ENCODE measurements at regions of chr1 and their contacts with region 1.

Region 1: DNA sequence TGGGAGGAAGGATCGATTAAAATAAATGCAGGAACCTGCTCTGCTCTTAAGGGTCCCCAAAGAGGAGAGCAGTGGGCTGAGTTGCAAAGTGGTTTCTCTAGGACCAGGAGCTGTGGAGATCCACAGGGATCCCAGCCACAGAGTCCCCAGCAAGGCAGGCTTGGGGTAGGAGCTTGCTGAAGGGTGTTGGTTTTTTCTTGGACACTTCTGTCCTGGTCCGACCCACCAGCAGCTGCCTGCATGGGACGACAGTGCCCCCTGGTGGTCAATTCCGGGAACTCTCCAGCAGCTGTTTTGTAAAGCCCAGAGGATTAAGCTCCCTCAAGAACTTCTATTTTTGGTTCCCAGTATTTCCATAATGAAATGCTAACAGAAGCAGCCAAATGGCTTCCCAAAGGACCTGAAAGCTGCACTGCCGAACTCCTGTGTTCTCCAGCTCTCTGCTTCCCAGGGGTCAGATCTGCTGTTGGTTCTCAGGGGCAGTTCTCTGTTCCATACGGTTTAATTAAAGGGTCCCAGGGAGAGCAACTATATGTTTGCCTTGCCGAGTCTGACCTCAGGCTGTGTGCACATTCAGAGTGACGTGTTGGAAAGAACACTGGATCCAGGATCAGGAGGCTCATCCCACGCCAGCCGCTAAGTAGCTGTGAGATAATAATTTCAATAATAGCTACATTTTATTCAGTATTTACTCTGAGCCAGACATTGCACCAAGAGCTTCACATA is 23.2 kb downstream of the NENF start:
- DNase-seq: peak; percentile 37
- H3K4me3 ChIP-seq: no peak overlapping the region
- H3K27ac ChIP-seq: no peak overlapping the region
- H3K4me1 ChIP-seq: no peaks in the 10 kb centered on the region
- H3K27me3 ChIP-seq: no peaks in the 10 kb centered on the region
- CTCF ChIP-seq: peak; percentile 90 to 98

Region 2: DNA sequence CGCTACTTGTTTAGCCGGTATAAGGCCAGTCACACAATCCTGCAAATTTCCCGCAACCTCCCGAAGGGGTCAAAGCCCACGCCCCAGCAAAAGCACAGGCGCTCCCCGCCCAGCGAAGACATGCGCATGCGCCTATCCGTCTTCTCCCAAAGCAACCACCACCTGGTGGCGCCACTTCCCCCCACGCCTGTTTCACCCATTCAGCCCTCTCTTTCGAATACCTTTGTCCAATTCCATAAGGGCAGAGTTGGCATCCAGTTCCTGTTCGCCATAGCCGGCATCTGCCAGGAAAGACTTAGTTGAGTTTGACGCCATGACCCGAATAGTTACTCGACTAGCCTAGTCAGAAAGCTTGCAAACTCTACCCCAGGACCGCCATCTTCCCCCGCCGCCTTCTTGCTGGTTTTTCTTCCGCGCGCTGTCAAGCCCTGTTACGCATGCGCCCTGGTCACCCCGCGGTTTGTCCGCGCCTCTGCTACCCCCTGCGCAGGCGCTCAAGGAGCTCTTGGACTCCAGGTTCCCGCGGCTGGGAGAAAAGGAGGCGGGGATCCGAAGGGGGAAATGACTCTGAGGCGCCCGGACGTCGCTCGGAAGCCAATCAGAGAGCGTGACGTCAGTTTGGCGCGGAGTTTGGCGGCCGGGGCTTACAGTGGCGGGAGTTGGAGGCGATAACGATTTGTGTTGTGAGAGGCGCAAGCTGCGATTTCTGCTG is 420.7 kb before region 1 on chr1 and contains the starts of genes DTL and INTS7:
- CTCF ChIA-PET with region 1: interaction called, 24 read pairs
- dilution Hi-C with region 1: no loop called
- in situ Hi-C with region 1: no loop called
- intact Hi-C with region 1: loop called (anchors 1 kb)
- DNase-seq: peak; percentile 99
- H3K4me3 ChIP-seq: peak within 1 kb of the TSS; percentile 89 to 98 (median 95)
- H3K27ac ChIP-seq: peak within 1 kb of the TSS; percentile 86
- H3K4me1 ChIP-seq: peaks cover 30% of the 10 kb centered on the region
- H3K27me3 ChIP-seq: no peaks in the 10 kb centered on the region
- CTCF ChIP-seq: peak; percentile 77 to 84
- total RNA-seq, gene DTL: 3.2 to 24.6 TPM
- total RNA-seq, gene INTS7: 16.8 to 24.3 TPM

Region 3: GRCh38 chr1:212070720-212071302 is 385.2 kb before region 1 on chr1:
- CTCF ChIA-PET with region 1: interaction called, 16 read pairs
- dilution Hi-C with region 1: no loop called
- in situ Hi-C with region 1: loop called (anchors 5 kb)
- intact Hi-C with region 1: loop called (anchors 1 kb)
- DNase-seq: peak; percentile 25
- H3K4me3 ChIP-seq: no peak overlapping the region
- H3K27ac ChIP-seq: no peak overlapping the region
- H3K4me1 ChIP-seq: no peaks in the 10 kb centered on the region
- H3K27me3 ChIP-seq: no peaks in the 10 kb centered on the region
- CTCF ChIP-seq: peak; percentile 62 to 76

Region 4: GRCh38 chr1:212359794-212360479 is 96.0 kb before region 1 on chr1:
- CTCF ChIA-PET with region 1: no interaction called
- dilution Hi-C with region 1: loop called (anchors 5 kb)
- in situ Hi-C with region 1: no loop called
- intact Hi-C with region 1: no loop called
- DNase-seq: no peak
- H3K4me3 ChIP-seq: no peak overlapping the region
- H3K27ac ChIP-seq: no peak overlapping the region
- H3K4me1 ChIP-seq: no peaks in the 10 kb centered on the region
- H3K27me3 ChIP-seq: no peaks in the 10 kb centered on the region
- CTCF ChIP-seq: no peak

Region 5: DNA sequence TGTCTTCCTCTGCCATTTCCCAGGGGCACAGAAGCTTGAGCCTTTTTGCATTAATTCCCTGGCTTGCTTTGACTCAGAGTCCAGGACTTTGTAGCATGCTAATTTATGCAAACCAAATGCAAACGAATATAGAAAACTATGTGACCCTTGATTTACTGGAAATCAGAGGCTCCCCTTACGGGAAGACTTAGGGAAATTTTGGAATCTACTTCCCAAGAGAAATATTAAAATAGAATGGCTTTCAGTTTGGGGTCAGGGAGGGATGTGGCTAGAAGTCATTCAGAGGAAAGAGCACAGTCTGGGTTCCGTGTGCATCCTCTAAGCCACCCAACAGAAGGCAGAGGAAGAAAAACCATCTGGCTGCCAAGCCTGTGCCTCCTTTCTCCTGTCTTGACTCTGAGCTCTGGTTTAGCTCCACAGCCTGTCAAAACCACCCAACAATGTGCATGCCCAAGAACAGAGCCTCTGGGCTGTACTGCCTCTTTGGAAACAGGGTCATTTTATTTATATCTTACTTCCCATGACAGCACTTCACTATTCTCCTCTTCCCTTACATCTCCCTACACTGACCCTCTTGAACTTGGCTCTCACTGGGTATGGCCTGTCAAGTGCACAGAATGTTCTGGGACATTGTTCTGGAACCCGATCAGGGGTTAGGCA is 182.7 kb after region 1 on chr1:
- CTCF ChIA-PET with region 1: no interaction called
- dilution Hi-C with region 1: no loop called
- in situ Hi-C with region 1: no loop called
- intact Hi-C with region 1: no loop called
- DNase-seq: no peak
- H3K4me3 ChIP-seq: no peak overlapping the region
- H3K27ac ChIP-seq: no peak overlapping the region
- H3K4me1 ChIP-seq: no peaks in the 10 kb centered on the region
- H3K27me3 ChIP-seq: no peaks in the 10 kb centered on the region
- CTCF ChIP-seq: no peak

Region 6: DNA sequence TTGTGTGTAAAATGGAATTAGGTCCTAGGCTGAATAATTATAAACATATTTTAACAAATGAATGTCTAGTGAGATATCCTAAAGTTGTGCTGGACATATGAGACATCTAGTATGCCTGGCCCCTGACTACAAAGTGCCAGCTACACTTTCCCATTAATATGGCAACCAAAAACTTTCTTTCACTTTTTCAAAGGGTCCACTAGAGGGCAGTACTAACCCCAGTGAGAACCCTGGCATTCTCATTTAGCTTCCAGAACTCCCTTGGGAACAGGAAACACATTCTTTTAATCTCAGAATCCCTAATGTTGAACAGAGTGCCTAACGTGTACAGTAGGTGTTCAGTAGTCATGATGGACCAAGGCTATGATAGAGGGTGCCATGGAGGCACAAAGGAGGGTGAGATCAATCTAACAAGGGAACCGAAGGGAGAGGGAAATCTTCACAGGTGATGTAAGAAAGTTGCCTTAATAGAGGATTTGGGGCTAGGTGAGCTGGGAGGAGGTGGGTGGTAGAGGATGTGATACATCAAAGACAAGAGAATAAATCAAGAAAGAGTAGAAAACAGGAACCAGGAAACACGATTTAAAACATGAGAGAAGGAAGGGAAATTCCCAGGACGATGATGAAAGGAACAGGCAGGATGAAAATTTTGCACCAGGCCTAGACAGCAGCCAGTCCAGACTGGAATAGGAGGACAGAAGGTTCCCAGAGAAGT is 294.0 kb after region 1 on chr1:
- CTCF ChIA-PET with region 1: no interaction called
- dilution Hi-C with region 1: no loop called
- in situ Hi-C with region 1: loop called in 1 of 2 experiments (anchors 25 kb)
- intact Hi-C with region 1: no loop called
- DNase-seq: peak; percentile 59
- H3K4me3 ChIP-seq: no peak overlapping the region
- H3K27ac ChIP-seq: no peak overlapping the region
- H3K4me1 ChIP-seq: peaks cover 3% of the 10 kb centered on the region
- H3K27me3 ChIP-seq: no peaks in the 10 kb centered on the region
- CTCF ChIP-seq: peak; percentile 74 to 80

Region 7: GRCh38 chr1:212857992-212858460 is 402.1 kb after region 1 on chr1 and contains the start of gene FLVCR1:
- CTCF ChIA-PET with region 1: no interaction called
- dilution Hi-C with region 1: no loop called
- in situ Hi-C with region 1: no loop called
- intact Hi-C with region 1: loop called (anchors 5 kb)
- DNase-seq: peak; percentile 94
- H3K4me3 ChIP-seq: peak within 1 kb of the TSS; percentile 73 to 95 (median 77)
- H3K27ac ChIP-seq: peak within 1 kb of the TSS; percentile 61
- H3K4me1 ChIP-seq: peaks cover 23% of the 10 kb centered on the region
- H3K27me3 ChIP-seq: no peaks in the 10 kb centered on the region
- CTCF ChIP-seq: no peak
- total RNA-seq, gene FLVCR1: 8.8 to 9.2 TPM

Region 8: GRCh38 chr1:212990276-212990675 is 534.3 kb after region 1 on chr1:
- CTCF ChIA-PET with region 1: no interaction called
- dilution Hi-C with region 1: loop called (anchors 25 kb)
- in situ Hi-C with region 1: loop called in 1 of 2 experiments (anchors 25 kb)
- intact Hi-C with region 1: loop called (anchors 1 kb)
- DNase-seq: no peak
- H3K4me3 ChIP-seq: no peak overlapping the region
- H3K27ac ChIP-seq: no peak overlapping the region
- H3K4me1 ChIP-seq: peaks cover 4% of the 10 kb centered on the region
- H3K27me3 ChIP-seq: no peaks in the 10 kb centered on the region
- CTCF ChIP-seq: no peak

Measured in mammary epithelial cell (primary cell).